Activated B cell treated with CpG ODN at 0.5 μM for 24 hours (primary cell): ENCODE measurements at regions of chr19 and their contacts with region 1.

Region 1: GRCh38 chr19:51637362-51637978 is 7.3 kb upstream of the SIGLEC5 start:
- DNase-seq: no peak
- ATAC-seq: no peak
- H3K4me3 Mint-ChIP-seq: no peak overlapping the region
- H3K27ac Mint-ChIP-seq: no peak overlapping the region
- H3K4me1 Mint-ChIP-seq: peaks cover 25% of the 10 kb centered on the region
- H3K27me3 Mint-ChIP-seq: no peaks in the 10 kb centered on the region
- CTCF ChIP-seq: no peak

Region 2: DNA sequence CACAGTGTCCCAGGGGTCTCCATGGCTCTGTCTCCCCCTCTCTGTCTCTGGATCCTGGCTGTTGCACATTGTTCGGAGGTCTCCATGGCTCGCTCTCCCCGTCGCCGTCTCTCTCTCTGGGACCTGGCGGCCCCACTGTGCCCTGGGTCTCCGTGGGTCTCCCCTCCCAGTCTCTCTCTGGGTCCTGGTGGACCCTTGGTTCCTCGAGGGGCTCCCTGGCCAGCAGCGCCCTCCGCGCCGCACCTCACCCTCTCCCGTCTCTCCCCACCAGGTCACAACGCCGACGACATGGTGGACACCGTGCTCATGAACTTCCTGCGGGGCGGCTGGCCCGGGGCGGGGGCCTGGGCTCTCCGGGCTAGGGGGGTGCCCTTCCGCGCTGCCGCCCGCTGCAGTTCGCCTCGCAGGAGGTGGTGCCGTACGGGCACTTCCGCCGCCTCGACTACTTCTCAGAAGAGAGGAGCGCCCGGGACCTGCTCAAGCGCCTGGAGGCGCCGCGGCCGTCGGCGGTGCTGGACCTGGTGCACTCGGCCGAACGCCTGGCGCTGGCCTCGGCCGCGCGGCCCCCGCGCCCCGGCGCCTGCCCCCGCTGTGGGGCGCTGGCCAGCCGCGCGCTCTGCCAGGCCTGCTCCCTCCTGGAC is 36.4 kb before region 1 on chr19:
- CTCF ChIA-PET with region 1: interaction called, 11 read pairs
- POLR2A ChIA-PET with region 1: no interaction called
- intact Hi-C with region 1: loop called (anchors 5 kb)
- DNase-seq: peak; percentile 62
- ATAC-seq: peak; percentile 86
- H3K4me3 Mint-ChIP-seq: peak overlapping the region; percentile 84
- H3K27ac Mint-ChIP-seq: peak overlapping the region; percentile 81
- H3K4me1 Mint-ChIP-seq: peaks cover 48% of the 10 kb centered on the region
- H3K27me3 Mint-ChIP-seq: no peaks in the 10 kb centered on the region
- CTCF ChIP-seq: no peak